Activated B cell treated with CpG ODN at 0.5 μM for 24 hours (primary cell): ENCODE measurements at regions of chr10 and their contacts with region 1.

Region 1: GRCh38 chr10:92848441-92849233 is at the start of gene EXOC6:
- DNase-seq: peak; percentile 89
- ATAC-seq: peak; percentile 84
- H3K4me3 Mint-ChIP-seq: peak within 1 kb of the TSS; percentile 87
- H3K27ac Mint-ChIP-seq: peak within 1 kb of the TSS; percentile 87
- H3K4me1 Mint-ChIP-seq: peaks cover 34% of the 10 kb centered on the region
- H3K27me3 Mint-ChIP-seq: no peaks in the 10 kb centered on the region
- CTCF ChIP-seq: no peak
- total RNA-seq, gene EXOC6: 15.3 and 17.3 TPM in 2 replicates

Region 2: GRCh38 chr10:91409869-91410637 is 1438.6 kb before region 1 on chr10 and contains the start of gene HECTD2:
- CTCF ChIA-PET with region 1: no interaction called
- POLR2A ChIA-PET with region 1: no interaction called
- intact Hi-C with region 1: loop called (anchors 10 kb)
- DNase-seq: peak; percentile 84
- ATAC-seq: peak; percentile 82
- H3K4me3 Mint-ChIP-seq: peak within 1 kb of the TSS; percentile 89
- H3K27ac Mint-ChIP-seq: peak within 1 kb of the TSS; percentile 90
- H3K4me1 Mint-ChIP-seq: peaks cover 13% of the 10 kb centered on the region
- H3K27me3 Mint-ChIP-seq: no peaks in the 10 kb centered on the region
- CTCF ChIP-seq: no peak
- total RNA-seq, gene HECTD2: 8.1 and 8.6 TPM in 2 replicates

Region 3: GRCh38 chr10:92573798-92574547 is 274.7 kb before region 1 on chr10 and contains the start of gene IDE:
- CTCF ChIA-PET with region 1: interaction called, 3 read pairs
- POLR2A ChIA-PET with region 1: no interaction called
- intact Hi-C with region 1: loop called (anchors 2 kb)
- DNase-seq: peak; percentile 84
- ATAC-seq: peak; percentile 76
- H3K4me3 Mint-ChIP-seq: peak within 1 kb of the TSS; percentile 88
- H3K27ac Mint-ChIP-seq: peak within 1 kb of the TSS; percentile 85
- H3K4me1 Mint-ChIP-seq: peaks cover 40% of the 10 kb centered on the region
- H3K27me3 Mint-ChIP-seq: no peaks in the 10 kb centered on the region
- CTCF ChIP-seq: no peak
- total RNA-seq, gene IDE: 37.7 and 39.2 TPM in 2 replicates

Region 4: GRCh38 chr10:92699518-92700381 is 148.9 kb before region 1 on chr10:
- CTCF ChIA-PET with region 1: interaction called, 3 read pairs
- POLR2A ChIA-PET with region 1: interaction called, 13 read pairs
- intact Hi-C with region 1: no loop called
- DNase-seq: peak; percentile 46
- ATAC-seq: peak; percentile 64
- H3K4me3 Mint-ChIP-seq: peak overlapping the region; percentile 88
- H3K27ac Mint-ChIP-seq: peak overlapping the region; percentile 85
- H3K4me1 Mint-ChIP-seq: peaks cover 72% of the 10 kb centered on the region
- H3K27me3 Mint-ChIP-seq: no peaks in the 10 kb centered on the region
- CTCF ChIP-seq: no peak

Region 5: GRCh38 chr10:92742331-92743228 is 106.1 kb before region 1 on chr10:
- CTCF ChIA-PET with region 1: interaction called, 3 read pairs
- POLR2A ChIA-PET with region 1: interaction called, 18 read pairs
- intact Hi-C with region 1: no loop called
- DNase-seq: peak; percentile 30
- ATAC-seq: peak; percentile 95
- H3K4me3 Mint-ChIP-seq: peak overlapping the region; percentile 78
- H3K27ac Mint-ChIP-seq: peak overlapping the region; percentile 95
- H3K4me1 Mint-ChIP-seq: peaks cover 79% of the 10 kb centered on the region
- H3K27me3 Mint-ChIP-seq: no peaks in the 10 kb centered on the region
- CTCF ChIP-seq: no peak

Region 6: GRCh38 chr10:92830478-92831389 is 17.9 kb before region 1 on chr10:
- CTCF ChIA-PET with region 1: interaction called, 16 read pairs
- POLR2A ChIA-PET with region 1: interaction called, 3 read pairs
- intact Hi-C with region 1: no loop called
- DNase-seq: no peak
- ATAC-seq: peak; percentile 88
- H3K4me3 Mint-ChIP-seq: peak overlapping the region; percentile 87
- H3K27ac Mint-ChIP-seq: peak overlapping the region; percentile 88
- H3K4me1 Mint-ChIP-seq: peaks cover 33% of the 10 kb centered on the region
- H3K27me3 Mint-ChIP-seq: no peaks in the 10 kb centered on the region
- CTCF ChIP-seq: no peak

Region 7: DNA sequence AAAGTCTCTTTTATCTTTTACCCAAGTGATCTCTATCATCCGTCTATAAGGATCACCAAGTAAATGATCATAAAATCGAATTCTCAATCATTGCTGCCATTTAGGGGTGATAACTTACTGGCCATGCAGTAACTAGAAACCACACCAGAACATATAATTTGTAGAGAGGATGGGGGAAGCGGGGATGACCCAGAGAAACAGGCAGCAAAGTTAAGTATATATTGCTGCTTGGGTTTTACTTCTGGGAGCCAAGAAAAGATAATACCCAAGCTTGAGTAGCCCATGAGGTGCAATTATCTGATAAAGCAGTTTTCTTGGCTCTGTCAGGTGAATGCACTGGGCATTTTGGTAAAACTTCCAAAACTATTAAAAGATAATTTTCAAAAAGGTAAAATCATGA is 18.6 kb after region 1 on chr10:
- CTCF ChIA-PET with region 1: interaction called, 7 read pairs
- POLR2A ChIA-PET with region 1: interaction called, 3 read pairs
- intact Hi-C with region 1: loop called (anchors 2 kb)
- DNase-seq: no peak
- ATAC-seq: no peak
- H3K4me3 Mint-ChIP-seq: no peak overlapping the region
- H3K27ac Mint-ChIP-seq: no peak overlapping the region
- H3K4me1 Mint-ChIP-seq: peaks cover 21% of the 10 kb centered on the region
- H3K27me3 Mint-ChIP-seq: no peaks in the 10 kb centered on the region
- CTCF ChIP-seq: no peak

Region 8: DNA sequence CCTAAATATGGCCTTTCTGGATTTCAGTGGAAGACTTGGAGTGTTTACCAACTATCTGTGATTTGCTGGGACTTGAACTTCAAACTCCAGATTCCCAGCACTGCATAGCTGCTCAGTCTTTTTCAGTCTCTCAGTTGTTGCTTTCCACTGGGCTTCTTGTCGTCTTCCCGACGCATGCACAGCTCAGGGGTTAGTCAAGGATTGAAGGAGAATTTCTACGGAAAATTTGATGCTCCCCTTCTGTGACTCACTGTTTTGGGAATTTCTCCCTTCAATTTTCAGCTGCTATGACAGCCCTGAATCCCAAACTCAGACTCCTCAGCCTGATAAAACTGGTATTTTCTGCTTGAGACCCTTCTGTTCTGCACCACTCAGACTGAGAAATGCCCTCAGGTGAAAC is 316.7 kb after region 1 on chr10:
- CTCF ChIA-PET with region 1: no interaction called
- POLR2A ChIA-PET with region 1: no interaction called
- intact Hi-C with region 1: no loop called
- DNase-seq: no peak
- ATAC-seq: no peak
- H3K4me3 Mint-ChIP-seq: no peak overlapping the region
- H3K27ac Mint-ChIP-seq: no peak overlapping the region
- H3K4me1 Mint-ChIP-seq: peaks cover 6% of the 10 kb centered on the region
- H3K27me3 Mint-ChIP-seq: peaks cover 11% of the 10 kb centered on the region
- CTCF ChIP-seq: no peak